Cardiac septum (tissue), 1 donor: ENCODE measurements at regions of chr14 and their contacts with region 1.

Region 1: GRCh38 chr14:38989922-38990546 is 113.0 kb downstream of the SEC23A start:
- DNase-seq: no peak

Region 2: GRCh38 chr14:38366374-38366773 is 623.7 kb before region 1 on chr14:
- intact Hi-C with region 1: loop called (anchors 10 kb)
- DNase-seq: no peak